A673 (cell line): ENCODE measurements at regions of chr17 and their contacts with region 1.

Region 1: DNA sequence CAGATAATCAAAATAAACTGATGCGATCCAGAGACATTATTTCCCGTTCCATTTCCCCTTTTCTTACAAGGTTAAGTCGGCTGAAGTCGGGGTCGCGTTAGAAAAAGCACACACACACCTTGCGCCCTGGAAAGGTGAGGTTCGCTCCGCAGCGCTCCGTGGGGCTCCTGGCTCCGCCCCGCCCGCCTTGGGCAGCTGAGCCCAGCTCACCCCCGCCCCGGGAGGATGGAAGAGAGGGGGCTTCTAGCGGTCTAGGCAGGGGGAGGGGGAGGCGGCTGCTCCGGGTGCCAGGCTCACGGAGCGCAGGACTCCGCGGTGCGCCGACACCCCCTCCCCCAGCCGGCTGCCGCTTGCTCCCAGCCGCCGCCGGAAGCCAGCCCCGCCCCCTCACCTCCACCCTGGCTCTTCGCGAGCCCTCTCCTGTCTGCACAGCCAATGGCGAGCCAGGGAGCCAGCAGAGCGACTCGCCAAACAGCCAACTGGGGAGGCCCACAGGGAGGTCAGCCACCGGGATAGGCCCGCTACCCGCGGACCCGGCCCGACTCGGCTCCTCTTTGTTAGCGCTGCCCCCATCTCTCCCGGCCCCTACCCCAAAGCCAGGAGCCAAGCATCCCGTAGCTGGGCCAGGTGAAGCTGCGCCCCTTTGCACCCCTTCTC is 30.4 kb downstream of the FAM222B start:
- DNase-seq: peak; percentile 99
- H3K4me3 ChIP-seq: peak overlapping the region; percentile 81
- H3K27ac ChIP-seq: peak overlapping the region; percentile 81
- H3K4me1 ChIP-seq: peaks cover 40% of the 10 kb centered on the region
- H3K27me3 ChIP-seq: no peaks in the 10 kb centered on the region
- CTCF ChIP-seq: no peak

Region 2: DNA sequence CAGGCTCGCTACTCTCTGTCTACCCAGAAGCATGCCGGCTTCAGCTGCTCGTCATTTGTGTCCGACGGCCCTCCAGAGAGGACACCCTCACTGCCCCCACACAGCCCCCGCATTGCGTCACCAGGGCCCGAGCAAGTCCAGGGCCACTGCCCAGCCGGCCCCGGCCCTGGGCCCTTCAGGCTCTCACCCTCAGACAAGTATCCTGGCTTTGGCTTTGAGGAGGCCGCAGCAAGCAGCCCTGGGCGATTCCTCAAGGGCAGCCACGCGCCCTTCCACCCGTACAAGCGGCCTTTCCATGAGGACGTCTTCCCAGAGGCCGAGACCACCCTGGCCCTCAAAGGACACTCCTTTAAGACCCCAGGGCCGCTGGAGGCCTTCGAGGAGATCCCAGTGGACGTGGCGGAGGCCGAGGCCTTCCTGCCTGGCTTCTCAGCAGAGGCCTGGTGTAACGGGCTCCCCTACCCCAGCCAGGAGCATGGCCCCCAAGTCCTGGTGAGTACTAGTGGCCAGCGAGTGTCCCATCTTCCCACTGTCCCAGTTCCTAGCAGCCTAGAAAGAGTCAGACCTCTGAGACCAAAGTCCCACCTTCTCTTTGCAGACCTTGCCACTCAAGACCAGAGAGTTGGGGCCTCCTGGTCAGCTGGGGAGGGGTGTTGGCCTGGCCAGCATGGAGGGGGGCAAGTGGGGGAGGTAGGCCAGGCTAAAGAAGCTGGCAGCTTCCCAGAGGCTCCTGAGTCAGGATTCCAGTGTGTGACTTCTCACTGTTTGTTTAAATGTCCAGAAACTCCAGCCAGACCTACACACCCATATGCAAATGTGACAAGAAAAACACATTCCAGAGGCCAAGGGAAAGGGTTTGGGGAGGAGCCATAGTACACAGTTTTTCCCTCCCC is 287.5 kb before region 1 on chr17:
- CTCF ChIA-PET with region 1: no interaction called
- POLR2A ChIA-PET with region 1: no interaction called
- intact Hi-C with region 1: no loop called
- DNase-seq: no peak
- H3K4me3 ChIP-seq: no peak overlapping the region
- H3K27ac ChIP-seq: no peak overlapping the region
- H3K4me1 ChIP-seq: no peaks in the 10 kb centered on the region
- H3K27me3 ChIP-seq: no peaks in the 10 kb centered on the region
- CTCF ChIP-seq: no peak

Region 3: DNA sequence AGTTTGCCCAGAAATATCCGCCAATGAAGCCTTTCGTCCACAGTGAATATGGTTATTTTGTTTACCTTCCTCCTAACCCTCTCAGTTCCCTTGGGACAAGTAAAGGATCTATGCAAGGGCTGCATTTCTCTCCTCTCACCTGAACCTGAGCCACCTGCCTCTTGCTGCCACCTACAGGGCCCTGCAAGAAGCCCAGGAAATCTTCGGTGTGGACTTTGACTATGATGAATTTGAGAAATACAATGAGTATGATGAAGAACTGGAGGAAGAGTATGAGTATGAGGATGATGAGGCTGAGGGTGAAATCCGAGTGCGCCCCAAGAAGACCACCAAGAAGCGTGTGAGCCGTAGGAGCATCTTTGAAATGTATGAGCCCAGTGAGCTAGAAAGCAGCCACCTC is 136.2 kb before region 1 on chr17:
- CTCF ChIA-PET with region 1: no interaction called
- POLR2A ChIA-PET with region 1: no interaction called
- intact Hi-C with region 1: no loop called
- DNase-seq: no peak
- H3K4me3 ChIP-seq: no peak overlapping the region
- H3K27ac ChIP-seq: no peak overlapping the region
- H3K4me1 ChIP-seq: no peaks in the 10 kb centered on the region
- H3K27me3 ChIP-seq: no peaks in the 10 kb centered on the region
- CTCF ChIP-seq: peak; percentile 36

Region 4: DNA sequence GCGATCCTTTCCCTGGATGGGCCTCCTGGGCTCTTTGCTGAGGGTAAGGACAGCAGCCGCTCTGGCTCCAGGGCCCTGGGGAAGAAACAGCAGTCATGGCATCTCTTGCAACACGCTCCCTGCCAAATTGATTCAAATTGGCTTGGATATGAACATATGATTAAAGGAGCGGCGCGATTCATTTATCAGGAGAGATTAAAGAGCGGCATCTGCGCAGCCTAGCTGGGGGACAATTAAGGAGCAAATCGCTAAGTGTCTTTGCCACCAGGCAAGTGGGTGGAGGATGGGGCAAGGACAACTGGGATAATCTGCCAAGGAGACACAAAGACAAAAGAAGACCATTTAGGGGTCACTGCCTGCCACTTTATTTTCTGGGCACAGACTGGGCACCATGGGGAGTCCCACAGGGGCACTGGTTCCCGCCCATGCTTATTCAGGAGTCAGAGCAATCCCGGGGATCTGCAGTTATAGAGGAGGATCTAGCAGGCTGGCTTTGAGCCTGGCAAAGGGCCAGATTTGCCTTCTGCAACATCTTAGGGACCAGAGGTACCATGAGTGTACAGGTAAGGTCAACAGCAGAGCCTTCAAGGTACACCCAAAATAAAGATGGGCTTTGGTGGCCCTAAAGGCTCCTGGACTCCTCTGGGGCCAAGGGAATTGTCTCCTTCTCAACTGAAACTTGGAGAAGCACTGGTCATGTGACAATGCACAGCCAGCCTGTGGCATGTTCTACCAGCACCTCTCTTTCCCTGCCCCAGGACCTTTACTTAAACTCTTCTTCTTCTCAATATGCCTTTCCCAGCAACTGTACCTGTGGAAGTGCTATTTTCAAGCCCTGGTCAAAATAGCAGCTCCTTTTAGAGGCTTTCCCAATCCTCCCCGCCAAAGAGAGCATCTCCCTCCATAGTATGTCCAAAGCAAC is 258.8 kb after region 1 on chr17:
- CTCF ChIA-PET with region 1: no interaction called
- POLR2A ChIA-PET with region 1: interaction called, 15 read pairs
- intact Hi-C with region 1: no loop called
- DNase-seq: no peak
- H3K4me3 ChIP-seq: no peak overlapping the region
- H3K27ac ChIP-seq: no peak overlapping the region
- H3K4me1 ChIP-seq: peaks cover 18% of the 10 kb centered on the region
- H3K27me3 ChIP-seq: no peaks in the 10 kb centered on the region
- CTCF ChIP-seq: no peak